CD14-positive monocyte (primary cell): ENCODE measurements at regions of chr11 and their contacts with region 1.

Region 1: DNA sequence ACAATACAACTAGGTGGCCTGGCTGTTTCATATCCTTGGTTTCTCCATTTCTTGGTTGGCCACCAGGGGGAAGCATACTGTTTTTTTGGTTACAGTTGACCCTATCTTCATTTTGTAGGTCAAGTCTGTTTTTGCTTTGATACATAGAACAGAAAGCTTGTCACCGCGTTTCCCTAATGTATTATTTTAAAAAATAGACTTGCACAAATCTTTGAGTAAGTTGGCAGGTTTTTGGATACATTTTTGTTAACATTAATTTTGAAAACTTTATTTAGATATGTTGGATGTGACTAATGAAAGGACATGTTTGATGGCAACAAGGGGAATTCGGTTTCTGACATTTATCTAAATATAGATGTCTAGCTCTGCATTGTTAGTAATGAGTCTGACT is 3.0 kb downstream of the NCR3LG1 start:
- DNase-seq: peak; percentile 64 to 76 (median 72)
- H3K4me3 ChIP-seq: peak overlapping the region in 1 of 3 experiments; percentile 73
- H3K4me3 Mint-ChIP-seq: peak overlapping the region; percentile 57 to 94
- H3K27ac ChIP-seq: no peak overlapping the region
- H3K27ac Mint-ChIP-seq: no peak overlapping the region
- H3K4me1 ChIP-seq: peaks cover 27 to 34% of the 10 kb centered on the region in 2 donors
- H3K4me1 Mint-ChIP-seq: peaks cover 29% of the 10 kb centered on the region
- H3K27me3 ChIP-seq: peaks cover 0 to 11% of the 10 kb centered on the region in 2 donors
- H3K27me3 Mint-ChIP-seq: peaks cover 4 to 26% (median 13%) of the 10 kb centered on the region in 3 donors
- CTCF ChIP-seq: peak; percentile 80

Region 2: GRCh38 chr11:17219016-17219415 is 135.6 kb before region 1 on chr11:
- intact Hi-C with region 1: loop called in 1 of 2 experiments (anchors 10 kb)
- DNase-seq: no peak
- H3K4me3 ChIP-seq: no peak overlapping the region
- H3K4me3 Mint-ChIP-seq: no peak overlapping the region
- H3K27ac ChIP-seq: no peak overlapping the region
- H3K27ac Mint-ChIP-seq: no peak overlapping the region
- H3K4me1 ChIP-seq: peaks cover 4 to 6% of the 10 kb centered on the region in 2 donors
- H3K4me1 Mint-ChIP-seq: peaks cover 5% of the 10 kb centered on the region
- H3K27me3 ChIP-seq: no peaks in the 10 kb centered on the region
- H3K27me3 Mint-ChIP-seq: peaks cover 3 to 11% (median 5%) of the 10 kb centered on the region in 3 donors
- CTCF ChIP-seq: no peak

Region 3: GRCh38 chr11:17230867-17231851 is 123.4 kb before region 1 on chr11:
- intact Hi-C with region 1: loop called in 1 of 2 experiments (anchors 10 kb)
- DNase-seq: peak; percentile 35 to 52 (median 48)
- H3K4me3 ChIP-seq: peak overlapping the region in 1 of 3 experiments; percentile 43
- H3K4me3 Mint-ChIP-seq: no peak overlapping the region
- H3K27ac ChIP-seq: no peak overlapping the region
- H3K27ac Mint-ChIP-seq: peak overlapping the region in 1 of 7 donors; percentile 15
- H3K4me1 ChIP-seq: peaks cover 7 to 15% of the 10 kb centered on the region in 2 donors
- H3K4me1 Mint-ChIP-seq: peaks cover 12% of the 10 kb centered on the region
- H3K27me3 ChIP-seq: peaks cover 0 to 2% of the 10 kb centered on the region in 2 donors
- H3K27me3 Mint-ChIP-seq: peaks cover 2 to 8% (median 3%) of the 10 kb centered on the region in 3 donors
- CTCF ChIP-seq: no peak

Region 4: GRCh38 chr11:17276236-17277023 is 78.2 kb before region 1 on chr11 and contains the start of gene NUCB2:
- intact Hi-C with region 1: loop called in 1 of 2 experiments (anchors 5 kb)
- DNase-seq: peak; percentile 87 to 91 (median 89)
- H3K4me3 ChIP-seq: peak within 1 kb of the TSS; percentile 57 to 85 (median 64)
- H3K4me3 Mint-ChIP-seq: peak within 1 kb of the TSS; percentile 90 to 95
- H3K27ac ChIP-seq: peak within 1 kb of the TSS; percentile 74 to 86
- H3K27ac Mint-ChIP-seq: peak within 1 kb of the TSS; percentile 83 to 96 (median 90)
- H3K4me1 ChIP-seq: peaks cover 26 to 56% of the 10 kb centered on the region in 2 donors
- H3K4me1 Mint-ChIP-seq: peaks cover 55% of the 10 kb centered on the region
- H3K27me3 ChIP-seq: no peaks in the 10 kb centered on the region
- H3K27me3 Mint-ChIP-seq: peaks cover 0 to 1% (median 1%) of the 10 kb centered on the region in 3 donors
- CTCF ChIP-seq: no peak
- polyA plus RNA-seq, gene NUCB2: 8.6 to 41.3 (median 31.4) TPM